Right ventricle myocardium superior (tissue), 1 donor: ENCODE measurements at regions of chr2 and their contacts with region 1.

Region 1: DNA sequence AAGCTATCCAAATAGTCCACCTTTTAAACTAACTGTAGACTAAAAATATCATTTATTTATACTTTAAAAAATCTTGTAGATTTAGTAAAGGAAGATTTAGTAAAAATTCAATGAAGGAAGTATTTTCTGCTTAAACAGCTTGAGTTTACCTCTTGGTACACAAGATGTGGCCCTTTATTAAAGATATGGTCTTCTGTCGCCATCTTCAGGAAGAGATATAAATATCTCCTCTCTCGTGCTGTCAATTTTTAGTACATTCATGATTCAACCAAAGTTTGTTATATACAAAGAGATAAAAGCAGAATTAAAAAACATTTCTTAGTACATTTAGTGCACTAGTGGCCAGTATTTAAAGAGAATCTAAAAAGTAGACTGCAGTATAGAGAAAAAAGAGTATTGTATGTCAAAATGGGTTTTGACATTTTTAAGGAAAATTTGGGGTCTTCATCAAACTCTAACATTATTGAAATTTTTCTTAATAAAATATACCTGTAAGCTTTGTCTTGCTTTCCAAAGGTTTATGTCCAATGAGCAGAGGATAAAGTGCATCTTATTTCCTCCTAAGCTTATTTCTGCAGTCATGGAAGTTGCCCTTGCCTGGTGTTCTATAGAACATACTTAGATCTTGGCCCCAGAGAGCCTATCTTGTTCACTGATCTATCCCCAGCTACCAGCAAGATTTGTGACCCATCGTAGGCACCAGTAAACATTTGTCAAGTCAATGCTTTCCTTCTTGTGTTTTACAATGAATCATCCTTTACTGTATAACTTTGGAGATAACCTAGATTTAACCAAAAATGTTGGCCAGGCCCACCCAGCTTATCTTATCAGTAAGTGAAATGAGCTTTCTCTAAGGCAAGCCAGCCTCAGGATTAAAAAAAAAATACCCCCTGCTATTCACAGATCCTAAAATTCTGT is 18.5 kb upstream of the EML6 start:
- DNase-seq: no peak
- ATAC-seq: peak; percentile 69

Region 2: DNA sequence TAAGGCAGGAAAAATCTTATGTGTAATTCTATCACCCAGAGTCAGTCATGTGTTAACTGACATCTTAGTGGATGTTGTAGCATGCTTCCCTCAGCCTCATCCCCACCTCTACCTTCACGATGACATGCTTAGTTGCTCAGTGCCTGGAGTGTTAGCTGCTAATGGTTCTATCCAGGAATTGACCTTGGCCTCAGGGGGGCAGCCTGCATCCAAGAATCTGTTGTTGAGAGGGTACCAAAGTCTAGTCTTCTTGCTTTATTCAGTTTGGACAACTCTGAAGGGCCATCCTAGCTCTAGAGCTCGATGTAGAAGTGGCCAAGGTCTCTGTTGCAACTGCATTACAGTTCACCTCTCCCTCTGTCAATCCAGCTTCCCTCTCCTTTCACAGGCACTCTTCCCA is 528.4 kb before region 1 on chr2:
- intact Hi-C with region 1: loop called (anchors 5 kb)
- DNase-seq: peak; percentile 63
- ATAC-seq: peak; percentile 79